ENCODE measurements at regions of chr4 and their contacts with region 1.

Region 1: DNA sequence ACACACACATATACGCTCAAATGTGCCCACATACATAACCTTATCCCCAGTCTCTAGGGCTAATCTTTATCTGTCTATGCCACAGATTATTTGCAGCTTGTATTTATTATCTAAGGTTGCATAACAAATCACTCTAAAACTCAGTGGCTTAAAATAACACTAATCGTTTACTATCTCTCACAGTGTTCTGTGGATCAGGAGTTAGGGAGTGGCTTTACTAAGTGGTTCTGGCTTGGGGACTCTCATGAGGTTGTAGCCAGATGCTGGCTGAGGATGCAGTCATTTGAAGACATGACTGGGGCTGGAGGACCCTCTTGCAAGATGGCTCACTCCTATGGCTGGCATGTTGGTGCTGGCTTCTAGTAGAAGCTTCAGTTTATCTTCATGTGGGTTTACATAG is 68.5 kb upstream of the LNX1 start:
- DNase-seq: no peak
- ATAC-seq: peak in 2 of 4 donors; percentile 56 to 80
- H3K4me3 ChIP-seq: no peak overlapping the region
- H3K27ac ChIP-seq: no peak overlapping the region
- H3K4me1 ChIP-seq: peaks cover 0 to 19% (median 0%) of the 10 kb centered on the region in 12 donors
- H3K27me3 ChIP-seq: no peaks in the 10 kb centered on the region
- CTCF ChIP-seq: no peak
- POLR2A ChIP-seq: no peak

Region 2: DNA sequence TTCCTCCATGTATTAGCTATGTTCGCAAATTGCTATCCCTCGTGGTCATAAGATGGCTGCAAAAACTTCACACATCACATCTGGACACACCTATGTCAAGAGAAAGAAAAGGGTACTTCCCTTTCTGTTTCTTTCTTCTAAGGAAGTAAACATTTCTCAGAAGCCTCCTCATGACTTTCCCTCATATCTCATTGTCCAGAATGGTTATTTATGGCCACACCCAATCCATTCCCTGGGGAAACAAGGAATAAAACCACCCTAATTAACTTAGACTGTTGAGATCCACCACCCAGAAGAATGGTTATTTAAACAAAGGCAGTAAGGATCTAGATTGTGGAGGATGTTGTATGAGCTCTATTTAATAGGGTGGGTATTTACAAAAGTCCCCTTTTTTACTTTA is 92.4 kb after region 1 on chr4:
- intact Hi-C with region 1: loop called in 1 of 10 experiments (anchors 10 kb)
- DNase-seq: no peak
- ATAC-seq: no peak
- H3K4me3 ChIP-seq: no peak overlapping the region
- H3K27ac ChIP-seq: no peak overlapping the region
- H3K4me1 ChIP-seq: no peaks in the 10 kb centered on the region
- H3K27me3 ChIP-seq: peaks cover 0 to 9% (median 0%) of the 10 kb centered on the region in 9 donors
- CTCF ChIP-seq: no peak
- POLR2A ChIP-seq: no peak

Region 3: DNA sequence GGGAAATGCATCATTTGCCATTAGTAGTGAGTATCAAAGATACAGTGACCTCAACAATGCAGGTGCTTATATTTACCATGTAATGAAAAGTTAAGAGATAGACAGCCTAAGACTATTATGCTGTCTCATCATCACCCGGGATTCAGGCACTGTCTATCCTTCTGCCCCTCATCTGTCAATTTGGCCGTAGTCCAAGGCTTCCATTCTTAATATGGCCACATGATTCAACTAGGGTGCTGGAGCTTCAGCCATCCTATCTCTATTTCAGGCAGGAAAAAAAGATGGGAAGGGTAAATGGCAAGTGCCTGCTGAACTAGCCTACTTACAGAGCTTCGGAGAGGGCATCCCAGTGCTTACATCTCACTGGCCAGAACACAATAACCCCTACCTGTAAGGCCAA is 128.3 kb after region 1 on chr4:
- intact Hi-C with region 1: no loop called
- DNase-seq: no peak
- ATAC-seq: no peak
- H3K4me3 ChIP-seq: no peak overlapping the region
- H3K27ac ChIP-seq: no peak overlapping the region
- H3K4me1 ChIP-seq: peaks cover 0 to 6% (median 0%) of the 10 kb centered on the region in 12 donors
- H3K27me3 ChIP-seq: peaks cover 0 to 3% (median 0%) of the 10 kb centered on the region in 9 donors
- CTCF ChIP-seq: no peak
- POLR2A ChIP-seq: no peak